Activated B cell treated with CpG ODN at 0.5 μM for 24 hours (primary cell): ENCODE measurements at regions of chr16 and their contacts with region 1.

Region 1: GRCh38 chr16:89241187-89242007 is 23.9 kb downstream of the ZNF778 start:
- DNase-seq: peak; percentile 75
- ATAC-seq: peak; percentile 77
- H3K4me3 Mint-ChIP-seq: peak overlapping the region; percentile 99
- H3K27ac Mint-ChIP-seq: peak overlapping the region; percentile 99
- H3K4me1 Mint-ChIP-seq: peaks cover 29% of the 10 kb centered on the region
- H3K27me3 Mint-ChIP-seq: no peaks in the 10 kb centered on the region
- CTCF ChIP-seq: no peak

Region 2: DNA sequence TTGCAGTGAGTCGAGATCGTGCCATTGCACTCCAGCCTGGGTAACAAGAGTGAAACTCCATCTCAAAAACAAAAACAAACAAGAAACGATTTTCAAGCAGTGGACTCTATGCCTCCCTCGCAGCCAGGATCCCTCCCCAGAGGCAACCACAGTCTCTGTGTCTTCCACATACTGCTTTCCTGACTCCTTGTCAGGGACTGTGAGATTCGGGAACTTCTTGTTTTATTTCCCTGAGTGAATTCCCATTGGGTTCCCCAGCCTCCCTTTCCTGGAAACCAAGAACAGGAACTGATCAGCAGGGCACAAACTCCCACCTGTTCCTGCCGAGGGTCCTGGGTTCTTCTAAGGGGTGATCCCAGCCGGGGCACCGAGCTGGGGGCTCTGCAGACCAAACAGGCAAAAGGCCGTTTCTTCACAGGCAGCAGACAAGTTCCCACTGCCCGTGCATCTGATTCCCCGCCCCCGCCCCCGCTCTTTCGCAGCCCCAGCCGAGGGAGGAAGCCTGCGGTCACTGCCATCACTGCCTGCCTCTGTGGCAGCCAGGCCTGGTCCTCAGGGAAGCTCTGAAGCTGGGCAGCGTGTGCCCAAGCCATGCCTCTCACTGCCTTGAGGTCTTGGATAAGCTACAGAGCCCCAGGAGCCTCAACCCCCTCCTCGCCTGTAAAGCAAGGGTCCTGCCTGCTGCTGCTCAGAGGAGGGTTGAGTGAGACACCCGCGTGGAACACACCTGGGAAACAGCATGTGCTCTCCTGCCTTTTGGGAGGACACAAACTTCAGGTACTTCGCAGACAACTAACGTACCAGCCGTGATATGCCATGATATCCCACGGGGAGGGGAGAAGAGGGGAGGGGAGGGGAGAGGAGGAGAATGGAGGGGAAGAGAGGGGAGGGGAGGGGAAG is 450.8 kb before region 1 on chr16:
- CTCF ChIA-PET with region 1: no interaction called
- POLR2A ChIA-PET with region 1: interaction called, 10 read pairs
- intact Hi-C with region 1: no loop called
- DNase-seq: peak; percentile 34
- ATAC-seq: peak; percentile 71
- H3K4me3 Mint-ChIP-seq: peak overlapping the region; percentile 55
- H3K27ac Mint-ChIP-seq: peak overlapping the region; percentile 79
- H3K4me1 Mint-ChIP-seq: peaks cover 52% of the 10 kb centered on the region
- H3K27me3 Mint-ChIP-seq: no peaks in the 10 kb centered on the region
- CTCF ChIP-seq: no peak

Region 3: GRCh38 chr16:89289428-89290395 is 48.3 kb after region 1 on chr16:
- CTCF ChIA-PET with region 1: no interaction called
- POLR2A ChIA-PET with region 1: interaction called, 3 read pairs
- intact Hi-C with region 1: loop called (anchors 1 kb)
- DNase-seq: peak; percentile 53
- ATAC-seq: peak; percentile 91
- H3K4me3 Mint-ChIP-seq: no peak overlapping the region
- H3K27ac Mint-ChIP-seq: no peak overlapping the region
- H3K4me1 Mint-ChIP-seq: peaks cover 4% of the 10 kb centered on the region
- H3K27me3 Mint-ChIP-seq: no peaks in the 10 kb centered on the region
- CTCF ChIP-seq: peak; percentile 48

Region 4: GRCh38 chr16:89300311-89300975 is 59.0 kb after region 1 on chr16:
- CTCF ChIA-PET with region 1: no interaction called
- POLR2A ChIA-PET with region 1: interaction called, 10 read pairs
- intact Hi-C with region 1: no loop called
- DNase-seq: no peak
- ATAC-seq: no peak
- H3K4me3 Mint-ChIP-seq: no peak overlapping the region
- H3K27ac Mint-ChIP-seq: no peak overlapping the region
- H3K4me1 Mint-ChIP-seq: peaks cover 22% of the 10 kb centered on the region
- H3K27me3 Mint-ChIP-seq: no peaks in the 10 kb centered on the region
- CTCF ChIP-seq: no peak

Region 5: GRCh38 chr16:89720813-89721545 is 479.6 kb after region 1 on chr16 and contains the starts of genes VPS9D1 and ZNF276:
- CTCF ChIA-PET with region 1: no interaction called
- POLR2A ChIA-PET with region 1: no interaction called
- intact Hi-C with region 1: loop called (anchors 5 kb)
- DNase-seq: peak; percentile 81
- ATAC-seq: peak; percentile 74
- H3K4me3 Mint-ChIP-seq: peak within 1 kb of the TSS; percentile 85
- H3K27ac Mint-ChIP-seq: peak within 1 kb of the TSS; percentile 85
- H3K4me1 Mint-ChIP-seq: peaks cover 35% of the 10 kb centered on the region
- H3K27me3 Mint-ChIP-seq: no peaks in the 10 kb centered on the region
- CTCF ChIP-seq: no peak
- total RNA-seq, gene VPS9D1: 6.6 and 7.4 TPM in 2 replicates
- total RNA-seq, gene ZNF276: 43.8 and 52.0 TPM in 2 replicates

Region 6: DNA sequence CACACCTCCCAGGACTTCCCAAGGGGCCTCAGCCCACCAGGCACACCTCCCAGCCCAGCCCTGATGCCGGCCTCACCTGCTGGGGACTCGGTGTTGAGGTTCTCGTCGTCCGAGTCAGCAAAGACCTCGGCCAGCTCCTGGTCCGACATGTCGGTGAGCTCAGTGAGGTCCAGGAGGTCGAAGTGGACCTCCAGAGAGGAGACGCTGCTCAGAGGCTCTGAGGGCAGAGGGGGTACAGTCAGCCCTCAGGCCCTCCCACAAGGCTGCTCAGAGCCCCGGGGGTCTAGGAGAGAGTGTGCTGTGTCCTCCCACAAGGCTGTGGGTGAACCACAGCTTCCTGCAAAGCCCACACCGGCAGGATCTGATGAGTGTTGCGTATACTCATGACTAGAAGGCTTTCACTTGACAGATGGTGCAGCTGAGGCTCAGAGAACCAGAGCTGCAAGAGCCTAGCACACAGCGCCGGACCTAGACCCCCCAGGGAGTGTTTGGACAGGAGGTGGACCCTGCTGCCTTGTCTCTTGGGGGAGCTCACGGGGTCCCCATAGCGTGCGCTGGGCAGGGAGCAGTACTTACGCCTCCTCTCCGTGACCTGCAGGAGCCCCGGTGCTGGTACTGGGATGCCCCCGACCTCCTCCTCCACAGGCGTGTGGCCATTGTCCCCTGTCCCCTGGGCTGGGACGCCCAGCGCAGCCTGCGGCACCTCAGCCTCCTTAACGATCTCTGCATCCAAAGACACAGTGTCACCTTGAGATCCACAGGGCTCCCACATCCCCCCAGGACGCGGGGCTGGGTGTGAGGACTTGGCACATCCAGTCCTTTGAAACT is 767.5 kb after region 1 on chr16:
- CTCF ChIA-PET with region 1: no interaction called
- POLR2A ChIA-PET with region 1: interaction called, 10 read pairs
- intact Hi-C with region 1: no loop called
- DNase-seq: peak; percentile 63
- ATAC-seq: peak; percentile 90
- H3K4me3 Mint-ChIP-seq: peak overlapping the region; percentile 60
- H3K27ac Mint-ChIP-seq: peak overlapping the region; percentile 76
- H3K4me1 Mint-ChIP-seq: peaks cover 63% of the 10 kb centered on the region
- H3K27me3 Mint-ChIP-seq: no peaks in the 10 kb centered on the region
- CTCF ChIP-seq: no peak